Calu3 (cell line): ENCODE measurements at regions of chr20 and their contacts with region 1.

Region 1: DNA sequence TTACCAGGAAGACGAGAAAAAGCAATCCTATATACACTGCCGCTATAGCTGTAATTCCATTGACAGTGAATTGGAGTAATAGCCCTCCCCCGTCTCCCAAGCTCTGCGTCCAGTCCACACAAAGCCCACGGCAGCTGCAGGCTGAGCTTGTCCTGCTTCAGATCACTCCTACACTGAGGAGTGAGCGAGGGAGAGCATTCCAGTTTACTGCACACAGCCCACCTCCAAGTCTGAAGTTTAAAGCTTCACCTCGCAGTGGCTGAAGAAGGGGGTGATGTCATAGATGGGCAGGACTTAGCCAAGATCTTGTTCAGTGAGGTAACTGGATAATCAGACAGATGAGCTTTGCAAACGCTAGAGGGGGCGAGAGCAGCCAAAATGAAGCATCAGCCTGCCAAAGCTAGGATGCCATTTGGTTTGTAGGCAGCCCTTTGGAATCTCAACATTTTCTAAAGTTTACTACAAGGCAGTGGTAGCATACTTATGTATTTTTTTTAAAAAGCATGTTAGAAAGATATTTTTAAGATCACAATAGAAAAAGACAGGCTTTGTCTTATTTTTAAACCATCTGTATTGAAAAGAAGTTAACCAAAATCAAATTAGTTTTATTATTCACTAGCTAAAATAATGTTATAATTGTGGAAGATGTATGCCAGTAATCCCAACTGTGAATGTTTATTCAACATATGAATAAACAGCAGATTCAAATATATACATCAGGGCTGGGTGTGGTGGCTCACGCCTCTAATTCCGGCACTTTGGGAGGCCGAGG is at the start of gene FLRT3:
- DNase-seq: peak; percentile 77
- H3K4me3 Mint-ChIP-seq: peak within 1 kb of the TSS; percentile 72
- H3K27ac Mint-ChIP-seq: peak within 1 kb of the TSS; percentile 61
- H3K4me1 Mint-ChIP-seq: peaks cover 9% of the 10 kb centered on the region
- H3K27me3 Mint-ChIP-seq: no peaks in the 10 kb centered on the region
- CTCF ChIP-seq: peak; percentile 46
- total RNA-seq, gene FLRT3: 4.6 and 9.5 TPM in 2 replicates

Region 2: DNA sequence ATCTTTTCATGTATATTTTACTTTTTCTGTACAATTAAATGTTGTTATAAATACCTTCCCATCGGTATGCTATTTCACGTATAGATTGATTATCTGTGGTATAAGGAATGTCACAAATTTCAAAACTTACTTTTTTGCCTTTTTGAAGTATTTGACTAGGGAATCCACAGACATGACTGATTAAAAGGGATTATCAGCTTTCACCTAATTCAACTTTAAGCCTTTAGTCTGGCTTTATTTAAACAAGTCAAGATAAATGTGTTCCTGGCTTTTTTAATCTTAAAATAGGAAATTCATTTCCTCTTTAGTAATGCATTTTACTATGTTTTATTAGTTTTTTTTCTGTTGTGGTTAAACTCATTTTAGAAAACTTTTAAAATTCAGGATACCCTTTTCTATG is 182.2 kb before region 1 on chr20:
- CTCF ChIA-PET with region 1: no interaction called
- intact Hi-C with region 1: no loop called
- DNase-seq: no peak
- H3K4me3 Mint-ChIP-seq: no peak overlapping the region
- H3K27ac Mint-ChIP-seq: no peak overlapping the region
- H3K4me1 Mint-ChIP-seq: no peaks in the 10 kb centered on the region
- H3K27me3 Mint-ChIP-seq: no peaks in the 10 kb centered on the region
- CTCF ChIP-seq: no peak

Region 3: DNA sequence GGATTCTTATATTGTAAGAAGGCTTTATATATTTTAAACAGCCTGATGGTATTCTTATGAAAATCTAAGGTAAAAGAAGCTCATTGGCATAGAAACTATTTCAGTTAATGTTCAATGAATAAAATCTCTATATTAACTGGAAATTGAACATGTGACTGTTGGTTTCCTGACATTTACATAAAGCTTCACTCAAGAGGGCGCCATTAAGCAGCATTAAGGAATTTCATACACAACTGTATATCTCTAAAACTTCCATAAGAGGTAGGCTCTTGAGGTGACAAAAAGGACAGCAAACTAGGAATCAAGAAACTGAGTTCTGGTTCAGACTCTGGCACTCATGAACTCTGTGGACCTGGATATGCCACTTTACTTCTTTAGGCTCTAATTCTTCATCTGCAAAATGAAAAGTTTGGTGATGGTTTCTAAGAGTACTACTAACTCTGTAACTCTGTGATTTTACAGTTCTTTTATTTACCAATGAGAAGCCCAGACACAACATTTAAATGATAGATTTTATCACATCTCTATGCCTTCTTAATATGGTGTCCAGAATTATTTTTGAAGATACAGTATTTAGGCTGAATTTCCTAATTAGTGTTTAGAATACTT is 147.7 kb before region 1 on chr20:
- CTCF ChIA-PET with region 1: no interaction called
- intact Hi-C with region 1: loop called (anchors 5 kb)
- DNase-seq: peak; percentile 12
- H3K4me3 Mint-ChIP-seq: no peak overlapping the region
- H3K27ac Mint-ChIP-seq: no peak overlapping the region
- H3K4me1 Mint-ChIP-seq: no peaks in the 10 kb centered on the region
- H3K27me3 Mint-ChIP-seq: no peaks in the 10 kb centered on the region
- CTCF ChIP-seq: no peak

Region 4: GRCh38 chr20:14570811-14571210 is 233.2 kb after region 1 on chr20:
- CTCF ChIA-PET with region 1: no interaction called
- intact Hi-C with region 1: loop called (anchors 10 kb)
- DNase-seq: no peak
- H3K4me3 Mint-ChIP-seq: no peak overlapping the region
- H3K27ac Mint-ChIP-seq: no peak overlapping the region
- H3K4me1 Mint-ChIP-seq: no peaks in the 10 kb centered on the region
- H3K27me3 Mint-ChIP-seq: no peaks in the 10 kb centered on the region
- CTCF ChIP-seq: no peak

Region 5: GRCh38 chr20:14696937-14697336 is 359.4 kb after region 1 on chr20:
- CTCF ChIA-PET with region 1: interaction called, 3 read pairs
- intact Hi-C with region 1: loop called (anchors 5 kb)
- DNase-seq: no peak
- H3K4me3 Mint-ChIP-seq: no peak overlapping the region
- H3K27ac Mint-ChIP-seq: no peak overlapping the region
- H3K4me1 Mint-ChIP-seq: no peaks in the 10 kb centered on the region
- H3K27me3 Mint-ChIP-seq: no peaks in the 10 kb centered on the region
- CTCF ChIP-seq: no peak

Region 6: DNA sequence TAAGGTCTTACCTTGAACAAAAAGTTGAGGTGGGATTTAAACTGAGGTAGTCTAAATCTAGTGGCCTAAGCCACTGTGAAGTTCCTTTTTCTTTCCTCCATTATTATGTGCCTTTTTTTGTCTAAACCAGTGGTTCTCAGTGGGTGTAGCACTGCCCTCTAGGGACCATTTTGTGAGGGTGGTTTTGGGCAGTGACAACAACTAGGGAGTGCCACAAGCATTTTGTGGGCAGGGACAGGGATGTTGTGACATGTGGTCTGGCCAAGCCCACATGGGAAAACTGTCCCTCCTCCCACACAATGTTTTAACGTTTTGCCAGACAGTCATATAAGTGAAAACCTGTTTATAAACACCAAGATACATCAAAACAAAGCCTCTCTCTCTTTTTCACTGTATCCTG is 899.2 kb after region 1 on chr20:
- CTCF ChIA-PET with region 1: no interaction called
- intact Hi-C with region 1: loop called (anchors 5 kb)
- DNase-seq: peak; percentile 37
- H3K4me3 Mint-ChIP-seq: no peak overlapping the region
- H3K27ac Mint-ChIP-seq: no peak overlapping the region
- H3K4me1 Mint-ChIP-seq: peaks cover 6% of the 10 kb centered on the region
- H3K27me3 Mint-ChIP-seq: no peaks in the 10 kb centered on the region
- CTCF ChIP-seq: no peak